HEK293T (cell line): ENCODE measurements at regions of chr1 and their contacts with region 1.

Region 1: DNA sequence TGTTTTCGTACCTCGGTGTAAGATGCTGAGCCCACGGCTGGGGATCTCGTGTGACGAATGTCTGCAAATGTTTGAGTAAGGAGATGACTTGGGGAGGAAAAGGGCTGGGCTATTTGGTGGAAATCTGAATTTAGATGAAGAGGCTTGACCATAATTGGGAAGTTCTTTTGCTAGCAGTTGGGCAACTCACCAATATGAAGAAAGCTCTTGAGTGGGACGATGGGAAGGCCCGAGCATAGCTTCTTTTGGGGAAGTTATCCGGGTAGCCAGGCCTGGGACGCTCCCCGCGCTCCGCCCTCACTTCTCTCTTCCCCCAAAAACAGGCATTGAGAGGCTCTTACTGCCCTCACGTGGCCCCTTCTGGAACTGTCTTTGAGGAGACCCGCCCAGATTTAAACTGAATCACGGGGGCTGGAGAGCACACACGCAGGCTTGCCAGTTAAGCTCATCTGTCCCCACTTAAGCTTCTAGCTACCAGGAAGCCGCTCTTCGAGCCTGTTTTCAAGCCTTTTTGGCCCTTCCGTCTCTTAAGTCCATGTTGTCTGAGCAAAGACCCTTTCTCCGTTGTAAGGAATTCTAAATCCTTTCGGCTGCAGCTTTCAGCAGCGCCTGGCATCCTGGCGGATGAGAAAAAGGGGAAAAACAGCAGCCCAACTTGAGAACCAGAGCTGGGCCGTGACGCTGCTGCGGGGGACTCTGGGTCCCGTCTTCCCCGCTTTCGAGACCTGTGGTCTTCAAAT is 93.1 kb downstream of the NID1 start:
- DNase-seq: peak; percentile 91

Region 2: DNA sequence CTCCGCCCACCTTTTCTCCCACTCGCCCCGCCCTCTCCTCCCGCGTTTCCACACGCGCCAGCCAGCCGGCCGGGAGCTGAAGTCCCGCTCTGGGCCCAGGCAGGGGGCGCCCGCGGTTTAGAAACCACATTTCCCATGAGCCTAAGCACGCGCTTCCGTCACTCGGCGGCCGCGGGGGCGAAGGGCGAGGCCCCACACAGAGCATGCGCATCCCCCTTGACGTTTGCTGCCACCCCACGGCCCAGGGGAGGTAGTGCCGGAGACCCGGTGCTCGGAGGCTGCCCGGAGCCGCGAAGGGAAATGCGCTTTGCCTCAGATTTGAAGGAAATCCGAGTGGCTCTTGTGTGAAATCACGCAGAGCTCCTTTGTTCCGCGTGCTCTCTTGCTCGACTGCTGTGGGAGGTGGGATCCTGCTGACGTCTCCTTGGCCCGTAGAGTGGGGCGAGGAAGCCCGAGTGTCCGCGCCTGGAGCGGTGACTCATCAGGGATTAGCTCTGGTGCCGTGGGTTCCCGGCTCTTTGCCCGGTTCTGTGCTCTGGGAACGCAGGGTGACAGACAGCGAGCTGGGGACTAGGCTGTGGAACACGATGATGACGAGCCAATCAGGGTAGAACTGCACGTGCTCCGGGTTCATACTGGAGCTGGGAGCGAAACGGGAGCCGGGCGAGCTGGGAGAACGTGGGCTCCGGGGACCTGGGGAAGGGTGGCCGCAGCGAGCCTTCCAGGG is 467.1 kb before region 1 on chr1:
- CTCF ChIA-PET with region 1: interaction called, 10 read pairs
- POLR2A ChIA-PET with region 1: interaction called, 16 read pairs
- DNase-seq: peak; percentile 99

Region 3: GRCh38 chr1:235843461-235843961 is 128.2 kb before region 1 on chr1:
- CTCF ChIA-PET with region 1: interaction called, 25 read pairs
- POLR2A ChIA-PET with region 1: interaction called, 3 read pairs
- DNase-seq: peak; percentile 50

Region 4: GRCh38 chr1:235951661-235952060 is 20.1 kb before region 1 on chr1:
- CTCF ChIA-PET with region 1: interaction called, 27 read pairs
- POLR2A ChIA-PET with region 1: interaction called, 4 read pairs
- DNase-seq: no peak

Region 5: DNA sequence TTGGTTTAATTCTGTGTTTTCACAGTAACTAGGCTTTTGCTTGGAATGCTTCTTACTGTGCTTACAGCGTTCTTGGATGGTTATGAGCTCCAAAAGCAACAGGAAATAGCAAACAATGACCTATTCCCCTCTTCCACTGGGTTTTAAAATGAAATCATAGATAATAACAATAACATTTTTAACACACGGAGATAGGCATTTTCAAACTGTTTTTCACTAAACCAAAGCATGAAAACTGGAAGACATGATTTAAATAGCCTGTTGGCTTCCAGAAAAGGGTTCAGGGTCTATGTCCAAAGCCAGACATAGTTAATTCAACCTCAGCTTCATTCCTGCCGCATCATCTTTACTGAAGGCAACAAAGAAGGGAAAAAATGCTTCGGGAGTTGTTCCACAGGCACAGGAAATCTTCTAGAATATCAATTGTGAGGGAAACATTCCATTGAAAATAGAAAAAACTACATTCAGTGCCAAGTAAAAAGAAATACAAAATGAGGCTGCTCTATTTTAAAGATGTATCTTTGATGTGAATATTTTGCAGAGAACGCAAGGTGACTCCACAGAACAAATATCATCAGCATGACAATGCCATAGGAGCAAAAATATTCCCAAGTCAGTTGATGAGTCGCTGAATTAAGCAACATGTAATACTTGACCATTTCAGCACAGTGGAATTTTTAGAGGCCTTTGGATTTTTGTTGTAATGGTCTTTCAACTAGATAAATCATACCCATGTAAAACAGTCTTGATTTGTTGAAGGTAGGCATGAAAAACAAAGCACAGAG is 12.5 kb after region 1 on chr1:
- CTCF ChIA-PET with region 1: interaction called, 10 read pairs
- POLR2A ChIA-PET with region 1: no interaction called
- DNase-seq: no peak